ENCODE measurements at regions of chr13 and their contacts with region 1.

Region 1: GRCh38 chr13:20127577-20128466 is 33.0 kb downstream of the GJA3 start:
- DNase-seq: peak; percentile 61
- H3K4me3 Mint-ChIP-seq: peak overlapping the region; percentile 66
- H3K27ac Mint-ChIP-seq: no peak overlapping the region
- H3K4me1 Mint-ChIP-seq: no peaks in the 10 kb centered on the region
- H3K27me3 Mint-ChIP-seq: peaks cover 17% of the 10 kb centered on the region

Region 2: DNA sequence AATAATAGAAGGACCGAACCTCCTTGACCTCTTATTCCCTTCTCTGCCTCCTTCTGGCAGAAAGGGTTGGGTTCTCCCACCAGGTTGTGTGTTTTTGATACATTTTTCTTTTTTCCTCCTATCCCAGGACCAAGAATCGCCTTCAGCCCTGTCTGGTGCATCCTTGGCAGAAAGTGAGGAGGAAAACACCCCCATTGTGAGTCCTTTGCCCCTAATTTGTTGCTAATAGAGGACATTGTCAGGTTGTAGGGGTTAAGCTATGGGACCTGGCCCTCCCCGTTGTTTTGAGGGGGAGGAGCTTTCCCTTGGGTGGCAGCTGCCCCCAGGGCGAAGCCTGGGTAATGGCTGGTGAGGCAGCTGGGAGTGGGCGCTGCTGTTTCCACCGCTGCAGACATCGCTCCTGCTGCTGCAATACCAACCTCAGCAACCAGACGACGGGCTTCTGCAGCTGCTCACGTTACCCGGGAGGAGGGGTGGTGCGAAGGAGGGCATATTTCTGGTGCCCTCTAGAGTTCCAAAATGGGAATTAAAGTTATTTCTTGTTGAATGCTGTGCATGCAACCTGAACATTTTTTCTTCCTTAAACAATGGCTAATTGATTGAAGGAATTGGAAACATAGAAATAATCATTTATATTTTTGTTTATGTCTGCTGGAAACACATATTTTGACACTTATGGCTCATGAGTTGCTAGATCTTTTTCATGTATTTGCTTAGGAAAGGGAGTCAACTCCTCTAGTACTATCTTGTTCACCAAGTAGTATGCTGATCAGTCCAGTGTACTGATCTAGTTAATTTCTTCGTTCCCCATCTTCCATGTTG is 167.8 kb before region 1 on chr13:
- CTCF ChIA-PET with region 1: no interaction called
- POLR2A ChIA-PET with region 1: no interaction called
- intact Hi-C with region 1: no loop called
- DNase-seq: peak; percentile 93
- H3K4me3 Mint-ChIP-seq: peak overlapping the region; percentile 94
- H3K27ac Mint-ChIP-seq: peak overlapping the region; percentile 96
- H3K4me1 Mint-ChIP-seq: peaks cover 34% of the 10 kb centered on the region
- H3K27me3 Mint-ChIP-seq: no peaks in the 10 kb centered on the region

Region 3: DNA sequence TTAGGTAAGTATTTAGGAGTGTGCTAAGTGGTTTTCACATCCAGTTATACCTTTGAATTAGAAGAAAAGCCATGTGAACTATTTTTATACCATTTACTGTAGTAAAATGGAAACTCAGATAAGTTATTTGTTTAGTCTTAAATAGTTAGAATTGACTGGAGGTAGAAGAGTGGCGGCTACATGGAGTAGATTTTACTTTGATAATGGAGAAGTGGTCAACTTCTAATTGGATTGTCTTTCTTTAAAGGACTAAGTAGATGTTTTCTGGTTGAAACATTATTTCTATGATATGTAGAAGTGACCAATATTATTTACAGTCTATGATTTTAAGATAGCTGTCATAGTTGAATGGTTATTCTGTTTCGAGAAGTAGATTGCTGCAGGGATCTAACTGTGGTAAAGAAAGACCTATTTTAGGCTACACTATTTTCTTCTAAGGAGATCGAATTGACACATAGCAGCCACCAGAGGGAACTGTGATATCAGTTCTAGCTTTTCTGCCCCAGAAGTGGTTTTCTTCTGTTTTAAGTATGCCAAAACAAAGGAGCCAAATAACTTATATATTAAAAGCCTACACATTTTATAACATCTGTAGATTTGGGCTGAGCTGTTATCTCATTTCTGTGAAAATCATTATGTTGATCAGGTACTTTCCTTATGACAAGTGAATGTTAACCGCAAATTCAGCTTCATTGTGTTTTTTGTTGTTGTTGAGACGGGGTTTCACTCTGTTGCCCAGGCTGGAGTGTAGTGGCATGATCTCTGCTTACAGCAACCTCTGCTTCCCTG is 143.2 kb before region 1 on chr13:
- CTCF ChIA-PET with region 1: no interaction called
- POLR2A ChIA-PET with region 1: no interaction called
- intact Hi-C with region 1: loop called (anchors 10 kb)
- DNase-seq: peak; percentile 32
- H3K4me3 Mint-ChIP-seq: no peak overlapping the region
- H3K27ac Mint-ChIP-seq: peak overlapping the region; percentile 73
- H3K4me1 Mint-ChIP-seq: peaks cover 43% of the 10 kb centered on the region
- H3K27me3 Mint-ChIP-seq: no peaks in the 10 kb centered on the region

Measured in activated CD4-positive, alpha-beta memory T cell treated with anti-CD3 and anti-CD28 coated beads for 36 hours (primary cell).